ENCODE measurements at regions of chr1 and their contacts with region 1.

Region 1: DNA sequence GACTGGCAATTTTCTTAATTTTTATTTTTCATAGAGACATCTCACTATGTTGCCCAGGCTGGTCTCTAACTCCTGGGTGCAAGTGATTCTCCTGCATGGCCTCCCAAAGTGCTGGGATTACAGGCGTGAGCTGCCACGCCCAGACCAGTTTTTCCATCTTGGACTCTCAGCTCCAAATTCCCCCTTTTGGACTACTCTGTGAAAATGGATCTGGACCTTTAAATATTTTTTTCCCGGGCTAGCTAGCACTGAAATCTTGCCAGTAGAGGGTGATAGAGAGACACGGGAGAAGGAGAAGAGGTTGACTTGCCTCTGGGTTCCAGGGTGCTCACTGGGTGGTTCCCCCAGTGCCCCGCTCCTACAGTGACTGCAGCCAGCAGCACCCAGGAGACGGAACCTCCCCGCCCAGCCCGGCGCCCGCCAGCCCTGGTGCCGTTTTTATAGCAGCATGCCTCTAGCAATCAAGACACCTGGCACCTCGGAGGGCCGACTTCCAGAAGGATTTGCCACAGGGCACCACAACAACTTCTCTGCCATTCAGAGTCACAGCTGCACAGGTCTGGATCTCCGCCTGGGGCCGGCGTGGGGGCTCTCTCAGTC is 34.7 kb upstream of the SCCPDH start:
- DNase-seq: peak; percentile 81
- H3K4me3 Mint-ChIP-seq: no peak overlapping the region
- H3K27ac Mint-ChIP-seq: no peak overlapping the region
- H3K4me1 Mint-ChIP-seq: no peaks in the 10 kb centered on the region
- H3K27me3 Mint-ChIP-seq: peaks cover 2% of the 10 kb centered on the region

Region 2: DNA sequence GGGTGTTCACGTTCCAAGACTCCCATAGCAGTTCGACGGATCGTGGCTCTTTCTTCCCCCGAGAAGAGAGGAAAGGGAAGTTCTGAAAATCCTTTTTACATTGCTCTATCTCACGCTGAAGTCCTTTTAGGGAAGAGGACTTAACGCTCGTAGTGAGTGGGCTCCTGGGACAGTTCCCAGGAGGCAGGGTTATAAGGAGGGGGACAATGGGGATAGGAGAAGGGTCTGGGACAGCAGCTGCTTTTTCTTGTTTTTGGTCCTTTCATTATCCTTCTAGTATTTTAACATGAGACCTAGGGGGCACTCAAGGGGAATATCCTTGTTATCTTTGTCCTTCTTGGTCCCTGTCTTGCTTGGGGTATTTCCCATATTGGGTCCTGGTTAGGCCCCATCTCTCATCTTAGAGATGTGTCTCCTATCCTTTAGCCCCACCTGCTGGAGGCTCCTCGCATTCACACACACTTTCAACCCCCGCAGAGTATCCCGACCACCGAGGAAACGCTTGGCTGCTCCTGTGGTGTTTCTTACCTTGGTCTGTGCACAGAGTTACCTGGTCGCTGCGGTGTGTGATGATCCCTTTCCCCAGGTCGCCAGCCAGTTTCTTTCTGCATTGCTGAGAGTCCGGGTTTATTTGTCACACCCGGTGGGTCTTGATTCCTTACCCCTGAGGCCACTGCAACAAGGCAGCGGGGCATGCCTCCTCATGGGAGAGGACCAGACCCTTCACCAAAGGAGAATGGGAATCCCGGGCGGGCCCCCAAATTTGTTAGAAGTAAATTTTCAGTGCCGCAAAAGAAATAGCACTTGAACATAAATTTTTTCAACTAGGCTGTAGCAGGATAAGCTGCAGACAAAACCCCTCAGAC is 64.4 kb after region 1 on chr1:
- intact Hi-C with region 1: loop called (anchors 1 kb)
- DNase-seq: peak; percentile 87
- H3K4me3 Mint-ChIP-seq: no peak overlapping the region
- H3K27ac Mint-ChIP-seq: no peak overlapping the region
- H3K4me1 Mint-ChIP-seq: no peaks in the 10 kb centered on the region
- H3K27me3 Mint-ChIP-seq: no peaks in the 10 kb centered on the region

Region 3: GRCh38 chr1:246971090-246971721 is 281.7 kb after region 1 on chr1:
- intact Hi-C with region 1: loop called (anchors 2 kb)
- DNase-seq: peak; percentile 84
- H3K4me3 Mint-ChIP-seq: no peak overlapping the region
- H3K27ac Mint-ChIP-seq: no peak overlapping the region
- H3K4me1 Mint-ChIP-seq: no peaks in the 10 kb centered on the region
- H3K27me3 Mint-ChIP-seq: no peaks in the 10 kb centered on the region